IMR-90 (cell line): ENCODE measurements at regions of chr5 and their contacts with region 1.

Region 1: GRCh38 chr5:170854566-170854965 is 7.3 kb upstream of the RANBP17 start:
- DNase-seq: peak; percentile 15
- ATAC-seq: peak; percentile 93
- H3K4me3 ChIP-seq: no peak overlapping the region
- H3K27ac ChIP-seq: no peak overlapping the region
- H3K4me1 ChIP-seq: peaks cover 3% of the 10 kb centered on the region; the same call in 1 of the 2 replicates
- H3K27me3 ChIP-seq: no peaks in the 10 kb centered on the region
- CTCF ChIP-seq: no peak
- POLR2A ChIP-seq: no peak
- RAD21 ChIP-seq: no peak

Region 2: DNA sequence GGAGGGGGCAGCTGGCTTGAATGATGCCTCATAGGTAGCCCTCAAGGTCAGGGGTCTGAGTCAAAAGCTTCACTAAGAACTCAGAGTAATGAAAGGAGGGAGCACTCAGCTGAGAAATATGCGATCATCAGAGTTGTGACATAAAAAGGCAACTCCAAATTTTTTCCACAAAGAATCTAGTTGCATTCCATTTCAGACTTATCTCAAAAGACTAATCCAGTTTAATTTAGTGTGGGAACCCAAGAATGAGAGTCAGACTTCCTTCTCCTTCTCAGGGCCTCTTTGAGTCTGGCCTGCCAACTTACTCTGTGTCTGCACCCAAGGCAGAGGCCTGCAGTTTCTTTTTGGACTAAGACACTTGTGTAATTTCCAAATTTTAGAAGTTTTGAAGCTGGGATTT is 36.3 kb before region 1 on chr5:
- CTCF ChIA-PET with region 1: no interaction called
- POLR2A ChIA-PET with region 1: no interaction called
- dilution Hi-C with region 1: no loop called
- in situ Hi-C with region 1: no loop called
- intact Hi-C with region 1: loop called (anchors 5 kb)
- DNase-seq: peak; percentile 71
- ATAC-seq: peak; percentile 81
- H3K4me3 ChIP-seq: no peak overlapping the region
- H3K27ac ChIP-seq: no peak overlapping the region
- H3K4me1 ChIP-seq: no peaks in the 10 kb centered on the region; the same call in 1 of the 2 replicates
- H3K27me3 ChIP-seq: no peaks in the 10 kb centered on the region; the same call in 1 of the 2 replicates
- CTCF ChIP-seq: no peak
- POLR2A ChIP-seq: no peak
- RAD21 ChIP-seq: no peak